PC-9 (cell line): ENCODE measurements at regions of chr9 and their contacts with region 1.

Region 1: GRCh38 chr9:113401027-113401792 is at the start of gene ALAD:
- DNase-seq: peak; percentile 93 to 100
- H3K4me3 ChIP-seq: peak within 1 kb of the TSS; percentile 75
- H3K27ac ChIP-seq: peak within 1 kb of the TSS; percentile 14; the same call in 1 of the 2 replicates
- H3K4me1 ChIP-seq: peaks cover 32% of the 10 kb centered on the region
- H3K27me3 ChIP-seq: no peaks in the 10 kb centered on the region
- CTCF ChIP-seq: peak; percentile 89
- total RNA-seq, gene ALAD: 33.3 and 42.7 TPM in 2 replicates

Region 2: DNA sequence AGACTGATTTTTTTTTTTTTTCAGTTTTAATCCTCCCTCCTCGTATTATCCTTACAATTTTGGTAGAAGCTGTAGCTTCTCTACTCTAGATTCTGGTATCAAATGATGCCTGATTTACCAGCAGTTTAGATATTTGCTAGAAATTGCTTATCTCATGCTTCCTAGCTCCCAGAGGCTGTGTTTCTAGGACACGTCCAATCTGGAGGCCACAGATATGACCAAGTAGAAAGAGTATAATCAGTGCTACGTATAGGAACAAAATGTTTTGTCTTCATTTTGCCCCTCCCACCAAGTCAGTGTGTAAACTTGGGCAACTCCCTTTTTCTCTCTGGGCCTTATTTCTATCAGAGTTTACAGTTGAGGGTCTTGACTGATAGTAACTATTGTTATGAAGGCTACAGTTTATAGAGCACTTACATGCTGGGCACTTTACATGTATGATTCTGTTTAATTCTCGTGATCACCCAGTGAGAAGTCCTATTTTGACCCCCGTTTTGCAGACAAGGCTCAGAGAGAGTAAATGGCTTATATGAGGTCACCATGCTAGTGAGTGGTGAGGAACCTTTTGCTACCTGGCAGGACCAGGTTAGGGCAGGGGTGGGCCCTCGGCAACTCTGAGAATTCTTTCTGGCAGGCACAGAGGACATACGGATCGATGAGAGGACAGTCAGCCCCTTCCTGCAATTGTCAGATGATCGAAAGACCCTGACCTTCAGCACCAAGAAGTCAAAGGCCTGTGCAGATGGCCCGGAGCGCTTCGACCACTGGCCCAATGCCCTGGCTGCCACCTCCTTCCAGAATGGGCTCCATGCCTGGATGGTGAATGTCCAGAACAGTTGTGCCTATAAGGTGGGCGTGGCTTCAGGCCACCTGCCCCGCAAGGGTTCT is 32.0 kb before region 1 on chr9:
- CTCF ChIA-PET with region 1: no interaction called
- POLR2A ChIA-PET with region 1: interaction called, 3 read pairs
- intact Hi-C with region 1: loop called (anchors 5 kb)
- DNase-seq: no peak
- H3K4me3 ChIP-seq: no peak overlapping the region
- H3K27ac ChIP-seq: no peak overlapping the region
- H3K4me1 ChIP-seq: no peaks in the 10 kb centered on the region
- H3K27me3 ChIP-seq: no peaks in the 10 kb centered on the region
- CTCF ChIP-seq: no peak

Region 3: DNA sequence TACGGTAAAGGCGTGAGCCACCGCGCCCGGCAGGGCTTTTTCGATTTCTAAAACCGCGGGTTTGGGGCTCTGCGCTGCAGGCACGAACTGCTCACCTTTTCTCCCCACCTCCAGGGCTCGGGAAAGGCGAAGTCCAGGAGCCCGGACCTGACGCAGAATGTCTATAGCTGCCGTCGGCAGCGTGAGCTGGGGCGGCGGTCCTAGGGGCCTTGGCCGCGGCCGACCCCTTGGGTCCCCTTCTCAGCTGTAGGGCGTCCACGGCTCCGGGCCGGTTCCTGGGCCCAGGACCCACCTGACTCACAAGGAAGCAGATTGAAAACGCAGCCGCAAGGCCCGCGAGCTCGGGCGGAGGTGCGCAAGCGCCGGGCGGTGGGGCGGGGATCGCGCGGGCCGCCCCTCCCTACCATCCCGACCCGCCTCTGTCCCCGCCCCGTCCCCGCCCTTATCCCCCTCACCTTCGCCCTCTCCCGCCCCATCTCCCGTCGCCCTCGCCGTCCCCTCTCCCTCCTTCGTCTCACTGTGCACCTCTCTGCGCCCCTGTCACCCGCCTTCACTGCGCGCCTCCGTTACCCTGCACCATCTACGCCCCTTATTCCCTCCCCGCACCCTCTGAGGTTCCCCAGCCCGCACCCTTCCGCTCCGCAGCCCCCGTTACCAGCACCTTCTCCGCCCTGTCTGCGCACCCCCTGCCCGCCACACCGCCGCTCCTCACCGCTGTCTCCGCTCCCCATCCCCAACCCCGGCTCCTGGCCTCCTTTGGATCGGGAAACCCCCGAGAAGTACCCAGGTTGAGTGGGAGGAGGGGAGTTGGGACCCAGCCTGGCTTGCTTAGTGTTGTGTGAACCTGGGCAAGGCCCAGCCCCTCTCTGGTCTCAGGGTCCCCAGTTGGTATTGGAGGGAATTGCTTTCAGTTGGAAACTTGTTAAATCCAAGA is 24.3 kb before region 1 on chr9 and contains the start of gene HDHD3:
- CTCF ChIA-PET with region 1: interaction called, 4 read pairs
- POLR2A ChIA-PET with region 1: no interaction called
- intact Hi-C with region 1: loop called (anchors 1 kb)
- DNase-seq: peak; percentile 74 to 78
- H3K4me3 ChIP-seq: peak within 1 kb of the TSS; percentile 76
- H3K27ac ChIP-seq: peak within 1 kb of the TSS; percentile 54
- H3K4me1 ChIP-seq: peaks cover 23% of the 10 kb centered on the region
- H3K27me3 ChIP-seq: no peaks in the 10 kb centered on the region
- CTCF ChIP-seq: no peak
- total RNA-seq, gene HDHD3: 39.5 and 44.0 TPM in 2 replicates

Region 4: GRCh38 chr9:113446323-113446740 is 45.1 kb after region 1 on chr9:
- CTCF ChIA-PET with region 1: no interaction called
- POLR2A ChIA-PET with region 1: no interaction called
- intact Hi-C with region 1: no loop called
- DNase-seq: no peak
- H3K4me3 ChIP-seq: no peak overlapping the region
- H3K27ac ChIP-seq: no peak overlapping the region
- H3K4me1 ChIP-seq: no peaks in the 10 kb centered on the region
- H3K27me3 ChIP-seq: no peaks in the 10 kb centered on the region
- CTCF ChIP-seq: peak; percentile 80